ENCODE measurements at regions of chr20 and their contacts with region 1.

Region 1: GRCh38 chr20:9978397-9979004 is 56.3 kb upstream of the ANKEF1 start:
- DNase-seq: peak; percentile 88
- H3K4me3 Mint-ChIP-seq: no peak overlapping the region
- H3K27ac Mint-ChIP-seq: no peak overlapping the region
- H3K4me1 Mint-ChIP-seq: peaks cover 10% of the 10 kb centered on the region
- H3K27me3 Mint-ChIP-seq: no peaks in the 10 kb centered on the region
- CTCF ChIP-seq: peak; percentile 87

Region 2: GRCh38 chr20:9989066-9989724 is 10.7 kb after region 1 on chr20:
- CTCF ChIA-PET with region 1: interaction called, 50 read pairs
- POLR2A ChIA-PET with region 1: interaction called, 4 read pairs
- intact Hi-C with region 1: no loop called
- DNase-seq: peak; percentile 82
- H3K4me3 Mint-ChIP-seq: peak overlapping the region; percentile 26
- H3K27ac Mint-ChIP-seq: peak overlapping the region; percentile 82
- H3K4me1 Mint-ChIP-seq: peaks cover 26% of the 10 kb centered on the region
- H3K27me3 Mint-ChIP-seq: no peaks in the 10 kb centered on the region
- CTCF ChIP-seq: no peak

Region 3: DNA sequence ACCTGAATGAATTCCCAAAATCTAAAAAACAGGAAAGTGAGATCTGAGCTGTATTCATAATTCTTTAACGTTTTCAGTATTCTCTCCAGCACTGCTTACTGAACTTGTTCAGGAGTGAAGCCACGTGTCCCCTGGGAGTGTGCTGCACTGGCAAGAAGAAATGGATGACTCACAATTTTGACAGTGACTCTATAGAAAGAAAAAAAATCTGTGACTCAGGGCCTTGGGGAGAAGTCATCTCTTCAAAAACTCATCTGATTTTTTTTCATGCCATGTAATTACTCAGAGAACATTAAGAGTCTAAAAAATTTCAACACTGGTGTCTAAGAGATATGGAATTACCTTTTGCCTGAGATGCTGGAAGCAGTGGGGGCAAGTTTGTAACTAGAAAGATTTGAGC is 96.0 kb after region 1 on chr20:
- CTCF ChIA-PET with region 1: interaction called, 62 read pairs
- POLR2A ChIA-PET with region 1: interaction called, 13 read pairs
- intact Hi-C with region 1: no loop called
- DNase-seq: peak; percentile 89
- H3K4me3 Mint-ChIP-seq: peak overlapping the region; percentile 33
- H3K27ac Mint-ChIP-seq: peak overlapping the region; percentile 20
- H3K4me1 Mint-ChIP-seq: peaks cover 39% of the 10 kb centered on the region
- H3K27me3 Mint-ChIP-seq: no peaks in the 10 kb centered on the region
- CTCF ChIP-seq: no peak

Region 4: DNA sequence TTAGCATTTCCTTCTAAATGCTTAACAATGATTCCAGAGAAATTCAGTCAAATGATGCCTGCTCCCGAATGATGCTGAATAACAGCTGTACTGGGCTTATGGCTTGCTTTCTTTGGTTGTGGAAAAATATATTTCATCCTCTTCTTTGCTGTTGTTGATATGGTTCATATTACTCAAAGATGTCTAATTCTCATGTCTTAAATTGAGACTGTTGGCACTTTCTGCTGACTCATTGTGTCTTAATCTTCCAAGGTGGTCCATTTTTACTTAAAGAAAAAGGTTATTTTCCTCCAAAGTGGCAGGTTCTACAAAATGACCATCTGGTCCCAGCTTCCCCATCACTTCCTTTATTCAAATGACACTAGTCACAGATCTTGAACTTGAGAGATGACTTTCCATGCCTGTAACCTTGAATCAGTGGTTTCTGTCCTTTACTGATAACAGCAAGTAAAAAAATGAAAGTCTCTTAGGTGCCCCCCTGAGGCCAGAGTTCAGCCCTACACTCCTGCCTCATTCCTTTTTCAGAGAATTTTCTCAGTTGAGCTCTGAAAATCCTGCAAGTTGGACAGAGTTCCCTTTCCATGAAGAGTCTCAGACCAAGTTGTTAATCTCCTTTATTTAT is 247.0 kb after region 1 on chr20:
- CTCF ChIA-PET with region 1: interaction called, 17 read pairs
- POLR2A ChIA-PET with region 1: no interaction called
- intact Hi-C with region 1: loop called (anchors 5 kb)
- DNase-seq: no peak
- H3K4me3 Mint-ChIP-seq: no peak overlapping the region
- H3K27ac Mint-ChIP-seq: no peak overlapping the region
- H3K4me1 Mint-ChIP-seq: no peaks in the 10 kb centered on the region
- H3K27me3 Mint-ChIP-seq: peaks cover 95% of the 10 kb centered on the region
- CTCF ChIP-seq: peak; percentile 30

Region 5: GRCh38 chr20:10434832-10435812 is 456.6 kb after region 1 on chr20 and contains the start of gene SLX4IP:
- CTCF ChIA-PET with region 1: interaction called, 345 read pairs
- POLR2A ChIA-PET with region 1: interaction called, 22 read pairs
- intact Hi-C with region 1: loop called (anchors 2 kb)
- DNase-seq: peak; percentile 97
- H3K4me3 Mint-ChIP-seq: peak within 1 kb of the TSS; percentile 86
- H3K27ac Mint-ChIP-seq: peak within 1 kb of the TSS; percentile 94
- H3K4me1 Mint-ChIP-seq: peaks cover 12% of the 10 kb centered on the region
- H3K27me3 Mint-ChIP-seq: no peaks in the 10 kb centered on the region
- CTCF ChIP-seq: no peak
- total RNA-seq, gene SLX4IP: 11.2 and 12.9 TPM in 2 replicates

Region 6: GRCh38 chr20:11544029-11544678 is 1565.7 kb after region 1 on chr20:
- CTCF ChIA-PET with region 1: interaction called, 8 read pairs
- POLR2A ChIA-PET with region 1: no interaction called
- intact Hi-C with region 1: loop called (anchors 1 kb)
- DNase-seq: peak; percentile 75
- H3K4me3 Mint-ChIP-seq: no peak overlapping the region
- H3K27ac Mint-ChIP-seq: no peak overlapping the region
- H3K4me1 Mint-ChIP-seq: no peaks in the 10 kb centered on the region
- H3K27me3 Mint-ChIP-seq: no peaks in the 10 kb centered on the region
- CTCF ChIP-seq: peak; percentile 73

Measured in MCF 10A (cell line).